Ascending aorta (tissue), 2 donors: ENCODE measurements at regions of chr1 and their contacts with region 1.

Region 1: DNA sequence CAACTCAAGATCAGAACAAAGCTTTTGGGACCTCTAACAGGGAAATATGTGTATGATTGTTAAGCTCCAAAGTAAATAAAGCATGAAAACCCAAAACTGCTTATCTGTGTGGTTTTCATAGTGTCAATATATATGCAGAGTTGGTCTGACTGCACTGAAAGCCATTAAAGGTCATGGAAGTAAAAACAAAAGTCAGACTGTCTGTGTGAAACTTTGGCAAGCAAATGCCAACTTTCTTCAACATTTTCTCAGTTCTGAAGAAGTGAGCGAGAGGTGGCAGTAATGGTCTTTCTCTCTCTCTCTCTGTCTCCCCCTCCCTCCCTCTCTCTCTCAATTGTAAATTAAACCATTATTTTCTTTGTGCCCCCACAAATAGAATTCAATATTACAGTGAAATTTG is 100.1 kb upstream of the S1PR1 start:
- DNase-seq: no peak
- H3K4me3 ChIP-seq: no peak overlapping the region
- H3K27ac ChIP-seq: no peak overlapping the region
- H3K4me1 ChIP-seq: peaks cover 0 to 9% of the 10 kb centered on the region in 2 donors
- H3K27me3 ChIP-seq: no peaks in the 10 kb centered on the region
- CTCF ChIP-seq: peak in 1 of 3 experiments; percentile 50

Region 2: GRCh38 chr1:101025657-101026504 is 110.9 kb before region 1 on chr1 and contains the start of gene DPH5:
- intact Hi-C with region 1: loop called (anchors 5 kb)
- DNase-seq: peak; percentile 45 to 94
- H3K4me3 ChIP-seq: peak within 1 kb of the TSS; percentile 76 to 82
- H3K27ac ChIP-seq: peak within 1 kb of the TSS; percentile 73 to 80
- H3K4me1 ChIP-seq: peaks cover 0 to 11% of the 10 kb centered on the region in 2 donors
- H3K27me3 ChIP-seq: no peaks in the 10 kb centered on the region
- CTCF ChIP-seq: peak in 1 of 3 experiments; percentile 4
- total RNA-seq, gene DPH5: 1.1 TPM

Region 3: GRCh38 chr1:101081496-101082488 is 54.9 kb before region 1 on chr1:
- intact Hi-C with region 1: no loop called
- DNase-seq: no peak
- H3K4me3 ChIP-seq: no peak overlapping the region
- H3K27ac ChIP-seq: no peak overlapping the region
- H3K4me1 ChIP-seq: no peaks in the 10 kb centered on the region
- H3K27me3 ChIP-seq: no peaks in the 10 kb centered on the region
- CTCF ChIP-seq: no peak

Region 4: DNA sequence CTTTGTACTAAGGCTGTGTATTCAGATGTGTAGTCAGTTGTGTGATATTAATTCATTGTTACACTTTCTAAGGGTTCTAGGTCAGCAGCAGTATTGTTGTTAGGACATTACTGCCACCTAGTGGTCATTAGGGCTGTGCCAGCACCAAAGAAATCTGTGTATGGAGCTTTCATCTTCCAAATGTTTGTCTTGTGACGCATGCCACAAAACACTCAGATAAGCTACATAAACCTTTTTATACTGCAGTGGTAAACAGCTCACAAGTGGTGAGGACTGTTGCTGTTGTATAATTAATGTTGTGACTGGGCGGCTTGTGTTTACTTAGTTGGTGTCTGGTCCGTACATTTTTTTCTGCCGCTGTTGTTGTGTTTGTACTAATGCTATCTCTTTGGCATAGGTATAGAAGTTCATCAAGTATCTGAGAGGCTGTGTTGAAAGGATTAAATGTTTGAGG is 151.8 kb after region 1 on chr1:
- intact Hi-C with region 1: loop called (anchors 2 kb)
- DNase-seq: peak in 1 of 2 donors; percentile 81
- H3K4me3 ChIP-seq: no peak overlapping the region
- H3K27ac ChIP-seq: no peak overlapping the region
- H3K4me1 ChIP-seq: no peaks in the 10 kb centered on the region
- H3K27me3 ChIP-seq: no peaks in the 10 kb centered on the region
- CTCF ChIP-seq: peak; percentile 67 to 92 (median 90)

Region 5: DNA sequence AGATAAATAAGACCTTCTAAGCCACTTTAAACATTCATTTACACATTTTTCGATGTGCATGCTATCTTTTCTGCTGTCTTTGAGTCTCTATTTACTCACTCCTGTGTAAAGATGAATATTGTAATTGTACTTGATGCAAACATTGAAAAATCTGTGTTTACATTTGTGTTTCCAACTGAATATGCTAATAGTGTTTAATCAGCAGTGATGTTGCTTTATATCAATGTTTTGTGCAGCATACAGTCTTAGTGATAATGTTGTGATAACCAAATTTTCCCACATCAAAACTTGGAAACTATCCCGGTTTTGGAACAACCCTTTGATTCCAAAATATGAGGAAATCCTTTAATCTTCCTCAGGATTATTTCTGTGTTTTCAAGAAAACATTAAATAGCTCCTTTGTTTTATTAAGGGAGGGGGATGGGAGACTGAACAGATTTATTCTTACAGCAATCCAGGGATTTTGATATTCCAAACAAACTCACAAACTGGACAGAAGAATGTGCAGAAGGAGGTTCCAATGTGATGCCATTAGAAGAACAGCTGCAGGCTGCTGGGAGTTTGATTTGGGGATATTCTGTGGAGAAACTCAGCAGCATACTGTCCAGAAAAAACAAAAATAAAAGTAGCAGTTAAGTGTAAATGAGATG is 348.1 kb after region 1 on chr1:
- intact Hi-C with region 1: no loop called
- DNase-seq: no peak
- H3K4me3 ChIP-seq: no peak overlapping the region
- H3K27ac ChIP-seq: no peak overlapping the region
- H3K4me1 ChIP-seq: no peaks in the 10 kb centered on the region
- H3K27me3 ChIP-seq: no peaks in the 10 kb centered on the region
- CTCF ChIP-seq: no peak